Left ventricle myocardium superior (tissue), 1 donor: ENCODE measurements at regions of chr13 and their contacts with region 1.

Region 1: DNA sequence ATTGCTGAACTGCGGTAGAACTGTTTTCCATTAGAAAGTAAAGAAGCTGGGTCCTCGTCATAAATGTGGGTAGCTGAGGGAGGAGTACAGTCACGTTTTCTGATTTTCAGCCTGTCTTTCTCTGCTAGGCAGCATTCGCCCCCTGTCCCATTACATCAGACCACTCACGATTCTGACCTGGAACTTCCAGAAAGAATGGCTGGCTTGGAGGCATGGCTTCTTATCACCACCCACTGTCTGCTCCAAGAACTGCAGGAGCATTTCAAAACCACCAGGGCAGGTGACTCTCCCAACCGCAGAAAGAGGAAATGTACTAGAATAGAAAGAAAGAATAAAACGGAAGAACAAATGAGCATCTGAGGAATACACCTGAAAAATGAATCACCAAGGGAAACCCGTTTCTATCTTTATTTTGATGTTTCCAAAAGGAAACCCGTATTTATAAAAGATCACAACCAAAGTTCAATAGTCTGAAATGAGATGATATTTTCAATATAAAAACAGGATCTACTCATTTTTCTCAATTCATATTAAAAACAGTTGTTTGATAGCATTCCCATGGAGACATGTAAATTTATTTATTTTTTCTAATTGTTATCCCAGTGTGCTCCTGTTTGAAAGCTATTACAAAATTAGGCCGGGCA is 22.1 kb upstream of the POMP start:
- DNase-seq: no peak
- ATAC-seq: peak; percentile 86

Region 2: DNA sequence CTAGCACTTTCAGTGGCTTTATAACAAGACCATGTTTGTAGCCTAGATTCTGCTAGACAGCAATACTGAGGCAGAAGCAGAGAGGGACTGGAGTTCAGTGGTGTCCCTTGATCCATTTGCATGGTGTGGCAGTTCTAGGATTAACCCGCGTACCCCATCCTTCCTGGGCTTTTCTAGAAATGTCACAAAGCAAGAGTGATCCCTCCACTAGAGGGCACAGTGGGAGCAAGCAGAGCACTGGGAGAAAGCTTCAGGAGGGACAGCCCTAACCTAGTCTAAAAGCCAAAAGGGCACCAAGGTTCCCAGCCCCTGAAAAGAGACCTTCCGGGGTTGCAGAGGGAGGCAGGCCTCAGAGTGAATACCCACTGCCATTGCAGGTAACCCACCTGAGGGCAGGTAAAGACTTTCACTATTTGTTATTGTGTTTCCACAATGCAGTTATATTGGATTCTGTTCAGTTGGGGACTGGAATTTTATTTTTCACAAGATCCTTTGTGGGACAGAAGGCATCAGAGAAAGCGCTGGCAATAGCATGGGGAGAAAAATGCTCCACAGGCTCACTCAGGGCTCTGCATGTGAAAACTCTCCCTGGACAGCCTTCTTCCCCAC is 312.5 kb before region 1 on chr13:
- intact Hi-C with region 1: loop called (anchors 1 kb)
- DNase-seq: no peak
- ATAC-seq: peak; percentile 86

Region 3: GRCh38 chr13:28582225-28582891 is 54.4 kb before region 1 on chr13:
- intact Hi-C with region 1: no loop called
- DNase-seq: no peak
- ATAC-seq: no peak